Panc1 (cell line): ENCODE measurements at regions of chr22 and their contacts with region 1.

Region 1: GRCh38 chr22:20588838-20589581 is 81.6 kb downstream of the MED15 start:
- DNase-seq: no peak
- ATAC-seq: no peak
- H3K4me3 ChIP-seq: no peak overlapping the region
- H3K27ac ChIP-seq: no peak overlapping the region
- H3K4me1 ChIP-seq: no peaks in the 10 kb centered on the region
- H3K27me3 ChIP-seq: no peaks in the 10 kb centered on the region
- CTCF ChIP-seq: no peak

Region 2: DNA sequence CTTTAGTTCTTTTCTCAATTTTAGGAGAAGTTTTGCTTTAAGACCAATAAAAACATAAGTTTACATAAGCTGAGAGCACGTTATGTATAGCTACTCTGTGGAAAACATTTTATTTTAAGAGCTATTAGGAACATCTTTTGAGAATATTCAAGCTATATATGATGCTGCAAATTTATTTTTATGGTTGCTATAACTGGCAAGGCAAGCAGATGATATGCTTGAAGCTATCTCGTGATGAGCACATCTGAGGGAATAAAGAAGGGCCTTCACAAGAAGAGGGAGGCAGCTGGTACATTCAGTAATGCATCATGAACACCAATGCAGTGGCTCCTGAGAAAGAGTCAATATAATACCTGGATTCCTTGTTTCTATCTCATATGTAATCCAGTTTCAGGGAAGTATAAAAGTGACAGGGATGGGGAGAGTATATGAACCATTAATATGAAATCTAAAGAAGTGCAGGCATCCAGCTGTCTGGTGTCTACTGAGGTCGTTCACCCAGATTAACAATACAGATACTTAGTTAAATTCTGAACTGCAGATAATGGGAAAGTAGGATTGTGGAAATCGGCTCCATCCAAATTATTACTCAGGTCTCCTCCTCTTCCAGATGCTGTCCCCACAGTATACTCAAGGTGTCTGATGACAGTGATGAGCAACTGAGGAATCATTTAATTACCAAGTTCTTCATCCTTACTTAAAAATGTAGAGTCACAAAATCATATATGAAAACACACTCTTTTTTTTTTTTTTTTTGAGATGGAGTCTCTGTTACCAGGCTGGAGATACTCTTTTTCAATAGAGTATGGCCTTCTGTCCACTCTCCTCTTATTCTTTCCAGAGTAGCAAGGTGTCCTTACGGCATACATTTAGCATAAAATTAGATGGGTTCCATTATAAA is 84.5 kb after region 1 on chr22:
- CTCF ChIA-PET with region 1: interaction called, 13 read pairs
- POLR2A ChIA-PET with region 1: no interaction called
- in situ Hi-C with region 1: no loop called
- intact Hi-C with region 1: no loop called
- DNase-seq: no peak
- ATAC-seq: no peak
- H3K4me3 ChIP-seq: no peak overlapping the region
- H3K27ac ChIP-seq: no peak overlapping the region
- H3K4me1 ChIP-seq: no peaks in the 10 kb centered on the region
- H3K27me3 ChIP-seq: no peaks in the 10 kb centered on the region; the same call in 1 of the 2 replicates
- CTCF ChIP-seq: no peak